Activated CD8-positive, alpha-beta T cell treated with anti-CD3 and anti-CD28 coated beads for 36 hours (primary cell): ENCODE measurements at regions of chr5 and their contacts with region 1.

Region 1: DNA sequence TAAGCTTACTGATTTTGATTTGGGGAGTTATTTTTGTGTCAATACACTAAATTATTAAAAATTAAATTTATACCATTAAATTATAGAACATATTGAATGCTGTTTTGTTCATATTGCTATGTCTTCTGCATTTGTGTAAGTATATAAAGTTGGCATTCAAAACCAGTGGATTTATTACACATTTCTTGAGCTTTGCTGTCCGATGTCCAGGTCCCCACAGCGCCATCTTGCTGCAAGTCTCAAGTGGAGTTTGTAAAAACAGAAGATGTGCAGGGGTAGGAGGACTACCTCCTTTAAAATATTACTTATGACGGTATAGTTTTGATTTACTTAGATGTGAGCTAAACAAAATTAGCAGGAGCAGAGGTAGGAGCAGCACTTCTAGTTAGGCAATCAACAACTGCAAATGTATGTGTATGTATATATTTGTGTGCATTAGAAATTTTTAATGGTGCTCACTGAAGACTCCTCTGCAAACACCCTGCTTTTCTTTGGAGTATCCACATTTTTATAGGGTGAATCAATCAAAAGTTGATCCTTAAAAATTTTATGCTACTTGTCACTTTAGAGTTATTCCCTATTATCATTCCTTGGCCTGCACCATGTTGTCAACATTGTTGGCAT is 37.4 kb downstream of the CPEB4 start:
- DNase-seq: peak; percentile 73
- ATAC-seq: no peak
- H3K4me3 Mint-ChIP-seq: no peak overlapping the region
- H3K27ac Mint-ChIP-seq: no peak overlapping the region
- H3K4me1 Mint-ChIP-seq: peaks cover 32% of the 10 kb centered on the region
- H3K27me3 Mint-ChIP-seq: no peaks in the 10 kb centered on the region
- CTCF ChIP-seq: peak; percentile 65

Region 2: DNA sequence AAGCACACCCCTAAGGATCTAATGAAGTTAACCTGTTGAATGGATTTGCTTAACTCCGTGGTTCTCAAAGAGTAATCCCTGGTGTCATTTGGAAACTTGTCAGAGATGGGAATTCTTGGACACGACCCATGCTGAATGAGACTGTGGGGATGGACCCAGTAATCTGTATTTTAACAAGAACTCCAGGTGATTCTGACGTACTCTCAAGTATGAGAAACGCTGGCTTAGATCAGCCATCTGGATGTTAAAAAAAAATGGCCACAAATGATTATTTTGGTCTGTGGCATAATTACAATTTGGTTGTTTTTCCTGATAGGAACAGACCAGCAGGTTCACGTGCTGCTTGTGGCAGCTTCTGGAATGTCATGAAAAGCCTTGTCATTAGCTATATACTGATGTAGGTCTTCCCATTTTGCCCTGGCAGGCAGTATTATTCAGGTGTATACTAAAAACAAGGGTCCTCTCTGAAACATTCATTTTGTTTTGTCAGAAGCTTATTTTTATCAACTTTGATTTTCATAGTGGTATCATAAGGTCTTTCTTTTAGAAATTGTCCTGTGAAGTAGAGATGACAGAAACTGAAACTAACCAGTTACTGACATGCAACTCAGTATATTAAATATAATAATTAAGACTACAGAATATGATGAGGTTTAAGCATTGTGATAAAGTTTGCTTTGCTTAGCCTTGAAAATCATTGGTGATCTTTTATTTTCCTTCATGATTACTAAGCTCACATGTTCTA is 22.0 kb before region 1 on chr5:
- CTCF ChIA-PET with region 1: interaction called, 14 read pairs
- POLR2A ChIA-PET with region 1: no interaction called
- intact Hi-C with region 1: no loop called
- DNase-seq: no peak
- ATAC-seq: no peak
- H3K4me3 Mint-ChIP-seq: no peak overlapping the region
- H3K27ac Mint-ChIP-seq: no peak overlapping the region
- H3K4me1 Mint-ChIP-seq: peaks cover 16% of the 10 kb centered on the region
- H3K27me3 Mint-ChIP-seq: no peaks in the 10 kb centered on the region
- CTCF ChIP-seq: no peak